Posterior cingulate gyrus (tissue), 11 donors: ENCODE measurements at regions of chrX and their contacts with region 1.

Region 1: GRCh38 chrX:129606918-129607317 is 47.8 kb downstream of the APLN start:
- DNase-seq: peak in 4 of 10 donors; percentile 35 to 74 (median 52)

Region 2: GRCh38 chrX:129726307-129727111 is 119.6 kb after region 1 on chrX:
- intact Hi-C with region 1: loop called (anchors 1 kb)
- DNase-seq: peak; percentile 27 to 95 (median 64)

Region 3: GRCh38 chrX:129843459-129844306 is 236.8 kb after region 1 on chrX and contains the start of gene ZDHHC9:
- intact Hi-C with region 1: loop called (anchors 10 kb)
- DNase-seq: peak; percentile 83 to 99 (median 90)

Region 4: DNA sequence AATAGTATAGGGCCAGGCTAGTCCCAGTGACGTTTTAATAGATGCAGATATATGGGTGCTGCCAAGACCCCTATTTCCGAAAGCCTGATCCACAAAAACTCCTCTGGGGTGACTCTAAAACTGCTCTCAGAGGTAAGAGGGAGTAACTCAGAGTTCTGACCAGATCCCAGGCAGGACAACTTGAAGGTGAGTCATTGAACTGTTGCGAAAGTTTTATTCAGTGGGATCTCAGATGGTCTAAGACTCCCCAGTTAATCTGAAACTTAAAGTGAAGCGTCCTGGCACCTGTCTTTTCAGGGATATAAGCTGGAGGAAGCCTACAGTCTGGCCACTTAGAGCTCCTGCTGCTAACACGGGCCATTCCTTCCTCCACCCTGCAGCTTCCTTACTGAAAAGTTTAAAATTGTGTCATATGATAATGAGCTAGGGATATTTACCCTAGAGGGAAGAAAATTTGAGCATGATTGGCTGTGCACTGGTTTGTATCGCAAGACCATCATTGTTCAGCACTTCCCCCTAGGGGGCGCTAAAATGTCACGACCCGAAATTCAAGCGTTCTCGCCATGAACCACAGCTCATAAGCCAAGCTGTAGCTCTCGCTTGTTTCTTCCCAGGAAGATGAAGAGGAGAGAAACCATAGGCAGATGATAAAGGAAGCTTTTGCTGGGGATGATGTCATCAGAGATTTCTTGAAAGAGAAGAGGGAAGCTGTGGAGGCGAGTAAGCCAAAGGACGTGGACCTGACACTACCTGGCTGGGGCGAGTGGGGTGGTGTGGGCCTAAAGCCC is 318.6 kb after region 1 on chrX:
- intact Hi-C with region 1: loop called (anchors 10 kb)
- DNase-seq: peak in 8 of 10 donors; percentile 51 to 96 (median 72)

Region 5: DNA sequence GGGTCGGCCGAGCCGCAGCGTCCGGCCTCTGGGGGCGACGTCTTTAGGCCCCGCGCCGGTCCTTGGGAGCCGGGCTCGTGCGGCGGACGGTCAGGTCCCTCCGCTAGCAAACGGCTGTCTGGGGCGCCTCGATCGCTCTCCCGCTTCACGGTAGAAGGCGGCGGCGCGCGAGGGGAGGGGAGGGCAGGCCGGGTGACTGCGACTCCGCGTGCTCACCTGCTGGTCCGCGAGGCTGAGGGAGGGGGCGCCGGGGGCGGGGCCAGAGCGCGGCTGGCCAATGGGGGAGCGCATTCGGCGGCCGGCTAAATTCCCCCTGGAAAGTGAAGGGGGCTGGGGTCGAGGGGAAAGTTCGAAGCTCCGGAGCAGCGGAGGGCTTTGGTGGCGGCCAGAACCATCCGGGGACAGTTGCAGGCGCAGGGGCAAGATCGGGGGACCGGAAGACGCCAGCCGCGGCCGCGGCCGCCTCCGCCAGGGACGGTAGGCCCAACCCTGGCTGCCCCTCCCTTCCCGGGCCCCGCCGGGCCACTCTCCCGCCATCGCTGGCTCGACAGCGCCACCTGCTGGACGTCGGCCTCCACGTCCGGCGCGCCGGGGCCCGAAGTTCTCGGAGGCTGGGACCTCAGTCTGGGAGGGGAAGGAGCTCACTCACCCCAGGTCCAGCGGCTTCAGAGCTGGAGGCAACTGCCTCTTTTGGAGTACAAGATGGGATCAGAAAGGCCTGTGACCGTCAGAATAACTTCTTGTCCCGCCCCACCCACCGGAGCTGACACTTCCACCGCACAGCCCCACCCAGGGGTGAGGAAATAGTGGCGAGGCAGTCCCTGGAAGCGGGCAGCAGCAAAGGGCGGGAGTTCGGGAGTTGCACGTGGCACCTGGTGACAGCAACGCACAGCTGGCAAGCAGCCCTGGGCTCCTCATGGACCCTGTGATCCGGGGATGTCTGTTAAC is 453.5 kb after region 1 on chrX:
- intact Hi-C with region 1: loop called (anchors 2 kb)
- DNase-seq: peak; percentile 56 to 96 (median 79)

Region 6: DNA sequence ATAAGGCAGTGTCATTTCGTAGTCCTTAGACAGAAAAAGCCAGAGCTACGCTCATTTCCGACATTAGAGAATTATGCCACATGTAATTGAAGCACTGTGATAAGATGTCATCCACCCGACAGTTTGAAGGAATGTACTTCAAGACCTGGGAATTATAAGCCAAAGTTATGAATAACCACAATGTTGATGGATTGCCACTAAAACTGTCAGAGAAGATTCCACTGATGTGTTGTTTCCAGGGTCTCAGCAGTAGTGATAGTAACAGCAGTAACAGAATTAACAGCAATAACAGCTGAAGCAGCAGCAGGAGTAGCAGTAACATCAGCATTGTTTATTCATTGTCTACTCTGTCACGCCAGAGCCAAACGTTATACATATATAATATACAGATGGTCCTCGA is 589.5 kb after region 1 on chrX:
- intact Hi-C with region 1: loop called (anchors 10 kb)
- DNase-seq: no peak

Region 7: DNA sequence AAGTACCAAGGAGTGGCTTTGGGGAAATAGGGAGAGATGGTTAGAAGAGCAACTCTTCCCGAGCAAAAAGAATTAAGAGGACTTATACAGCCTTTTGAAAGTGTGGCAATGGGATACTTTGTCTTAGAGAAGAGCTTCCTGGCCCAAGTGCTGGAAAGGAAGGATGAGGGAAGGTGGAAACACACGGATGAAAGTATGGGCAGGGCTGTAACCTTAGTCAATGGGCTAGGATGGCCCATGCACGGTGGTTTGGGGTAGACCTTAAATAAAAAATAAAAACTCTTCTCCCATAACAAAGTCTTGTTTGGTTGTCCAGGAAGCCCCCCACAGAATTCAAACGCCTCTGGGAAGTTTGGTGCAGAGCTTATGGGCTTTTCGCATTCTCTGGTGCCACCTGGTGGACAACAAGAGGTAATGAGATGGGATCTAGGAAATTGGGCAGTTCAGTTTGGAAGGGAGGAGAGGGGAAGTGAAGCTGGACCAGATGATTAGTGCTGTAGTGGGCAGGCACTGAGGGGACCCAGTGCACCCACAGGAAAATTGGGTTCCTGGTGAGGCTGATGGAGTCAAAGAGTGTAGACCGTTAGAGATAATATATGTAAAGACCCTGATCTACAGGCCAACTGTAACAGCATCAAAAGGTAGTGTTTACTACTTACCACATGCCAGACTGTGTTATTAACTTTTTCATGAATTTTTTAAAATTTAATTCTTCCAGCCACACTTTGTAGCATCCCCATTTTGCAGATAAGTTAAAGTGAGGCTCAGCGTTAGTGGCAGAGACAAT is 1309.9 kb after region 1 on chrX:
- intact Hi-C with region 1: loop called (anchors 10 kb)
- DNase-seq: peak in 6 of 10 donors; percentile 12 to 84 (median 26)